Mammary epithelial cell (primary cell): ENCODE measurements at regions of chr17 and their contacts with region 1.

Region 1: DNA sequence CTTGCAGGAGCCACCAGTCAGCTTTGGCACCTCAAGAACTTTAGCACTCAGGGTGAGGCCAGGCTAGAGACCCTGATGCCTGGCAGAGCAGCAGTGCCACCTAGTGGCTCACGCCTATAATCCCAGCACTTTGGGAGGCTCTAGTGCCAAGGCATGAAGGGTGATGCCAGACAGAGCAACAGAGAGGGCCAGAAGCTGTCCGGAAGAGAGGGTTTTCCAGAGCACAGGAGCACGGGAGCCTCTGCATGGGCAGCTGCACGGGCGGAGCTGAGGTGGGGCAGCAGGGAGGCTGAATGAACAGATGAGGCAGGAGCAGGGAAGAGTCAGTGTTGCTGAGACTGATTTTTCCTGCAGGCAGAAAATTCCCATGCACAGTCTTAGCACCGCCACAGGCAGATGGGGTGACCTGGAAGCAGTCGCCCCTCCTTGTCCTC is 38.9 kb downstream of the MYH3 start:
- DNase-seq: peak; percentile 68
- H3K4me3 ChIP-seq: no peak overlapping the region
- H3K27ac ChIP-seq: no peak overlapping the region
- H3K4me1 ChIP-seq: peaks cover 28% of the 10 kb centered on the region
- H3K27me3 ChIP-seq: no peaks in the 10 kb centered on the region
- CTCF ChIP-seq: peak; percentile 90 to 97

Region 2: DNA sequence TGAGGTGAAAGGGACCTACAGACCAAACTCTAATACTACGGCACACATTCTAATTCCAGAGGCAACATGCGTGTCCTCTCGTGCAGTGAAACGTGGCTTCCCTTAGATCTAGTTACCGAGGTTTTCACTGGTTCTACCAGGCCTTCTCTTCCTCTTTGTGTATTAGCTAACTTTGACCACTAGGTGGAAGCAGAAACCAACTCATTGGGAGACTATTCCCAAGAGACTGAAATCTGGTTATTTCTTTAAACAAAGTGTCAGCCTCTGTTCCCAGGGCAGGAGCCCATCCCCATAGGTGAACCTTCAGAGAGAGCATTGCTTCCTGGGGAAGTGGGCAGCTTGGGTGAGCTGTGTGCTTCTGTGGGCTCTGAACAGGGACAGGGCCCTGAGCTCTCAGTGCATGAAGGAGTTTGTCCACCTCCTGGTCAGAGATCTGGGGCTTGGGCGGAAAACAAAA is 693.5 kb before region 1 on chr17:
- CTCF ChIA-PET with region 1: interaction called, 6 read pairs
- dilution Hi-C with region 1: no loop called
- in situ Hi-C with region 1: loop called (anchors 5 to 10 kb)
- intact Hi-C with region 1: loop called (anchors 1 kb)
- DNase-seq: peak; percentile 56
- H3K4me3 ChIP-seq: no peak overlapping the region
- H3K27ac ChIP-seq: no peak overlapping the region
- H3K4me1 ChIP-seq: no peaks in the 10 kb centered on the region
- H3K27me3 ChIP-seq: no peaks in the 10 kb centered on the region
- CTCF ChIP-seq: peak; percentile 77 to 85

Region 3: GRCh38 chr17:10417431-10417830 is 200.8 kb before region 1 on chr17:
- CTCF ChIA-PET with region 1: no interaction called
- dilution Hi-C with region 1: no loop called
- in situ Hi-C with region 1: no loop called
- intact Hi-C with region 1: no loop called
- DNase-seq: no peak
- H3K4me3 ChIP-seq: no peak overlapping the region
- H3K27ac ChIP-seq: no peak overlapping the region
- H3K4me1 ChIP-seq: no peaks in the 10 kb centered on the region
- H3K27me3 ChIP-seq: no peaks in the 10 kb centered on the region
- CTCF ChIP-seq: no peak

Region 4: GRCh38 chr17:10563991-10564660 is 54.1 kb before region 1 on chr17:
- CTCF ChIA-PET with region 1: no interaction called
- dilution Hi-C with region 1: no loop called
- in situ Hi-C with region 1: no loop called
- intact Hi-C with region 1: no loop called
- DNase-seq: no peak
- H3K4me3 ChIP-seq: no peak overlapping the region
- H3K27ac ChIP-seq: no peak overlapping the region
- H3K4me1 ChIP-seq: no peaks in the 10 kb centered on the region
- H3K27me3 ChIP-seq: no peaks in the 10 kb centered on the region
- CTCF ChIP-seq: no peak

Region 5: DNA sequence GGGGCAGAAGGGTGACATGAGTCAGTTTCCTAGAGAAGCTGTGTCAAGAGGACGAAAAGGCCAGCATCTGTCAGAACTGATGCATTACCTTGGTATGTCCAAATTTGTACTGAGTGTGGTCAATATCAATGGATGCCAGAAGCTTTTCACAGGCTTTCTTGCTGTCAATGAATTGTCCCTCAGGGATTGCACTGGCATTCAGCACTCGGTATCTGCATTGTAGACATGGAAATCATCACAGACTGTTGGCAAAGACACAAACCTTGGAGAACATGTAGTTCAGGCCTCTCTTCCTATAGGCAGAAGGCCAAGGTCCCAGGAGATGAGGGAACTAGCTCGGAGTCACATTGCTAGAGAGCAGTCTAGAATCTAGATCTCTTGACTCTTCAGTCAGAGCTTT is 22.3 kb after region 1 on chr17:
- CTCF ChIA-PET with region 1: no interaction called
- dilution Hi-C with region 1: no loop called
- in situ Hi-C with region 1: no loop called
- intact Hi-C with region 1: no loop called
- DNase-seq: no peak
- H3K4me3 ChIP-seq: no peak overlapping the region
- H3K27ac ChIP-seq: no peak overlapping the region
- H3K4me1 ChIP-seq: no peaks in the 10 kb centered on the region
- H3K27me3 ChIP-seq: no peaks in the 10 kb centered on the region
- CTCF ChIP-seq: no peak

Region 6: DNA sequence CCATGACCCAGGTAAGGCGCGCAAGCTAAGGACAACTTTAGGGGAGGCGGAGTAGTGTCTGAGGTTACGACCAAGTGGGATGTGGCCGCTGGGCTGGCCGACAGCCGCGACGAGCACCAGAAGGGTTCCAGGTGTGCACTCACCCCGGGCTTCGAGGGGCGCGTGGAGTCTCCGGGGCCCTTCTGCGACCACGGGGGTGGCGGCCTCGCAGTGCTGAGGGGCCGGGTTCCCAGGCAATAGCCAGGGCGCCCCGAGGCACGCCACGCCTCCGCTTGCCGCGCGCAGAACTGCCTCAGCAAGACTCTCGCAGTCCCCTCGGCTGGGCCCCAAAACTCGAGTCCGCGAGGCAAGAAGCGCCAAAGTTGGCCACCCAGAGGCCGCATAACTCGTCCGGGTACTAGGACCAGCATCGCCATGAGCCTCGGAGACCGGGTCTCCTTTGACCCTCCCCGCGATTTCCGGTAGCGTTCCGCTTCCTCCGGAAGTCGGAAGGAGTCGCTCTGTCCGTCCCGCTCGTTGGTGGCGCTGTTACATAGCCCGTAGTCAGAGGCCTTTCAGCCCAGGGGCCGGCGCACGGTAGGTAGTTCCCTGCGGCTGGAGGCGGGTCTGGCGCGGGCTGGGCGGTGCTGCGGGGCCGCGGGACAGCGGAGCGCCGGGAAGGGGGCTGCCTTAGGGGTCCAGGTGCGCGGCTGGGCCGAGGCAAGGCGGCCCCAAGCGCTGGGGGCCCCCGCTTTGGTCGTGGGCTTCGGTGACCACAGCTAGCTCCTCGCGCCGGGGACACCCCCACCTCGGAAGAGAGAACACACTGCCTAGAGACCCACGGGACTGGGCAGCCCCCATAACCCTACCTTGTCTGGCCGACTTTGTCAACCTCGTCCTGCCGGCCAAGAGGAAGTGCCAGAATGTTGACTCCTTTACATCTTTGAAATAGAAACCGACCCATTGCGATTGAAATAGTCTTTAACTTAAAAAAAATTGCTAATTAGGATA is 79.2 kb after region 1 on chr17 and contains the starts of genes ADPRM and SCO1:
- CTCF ChIA-PET with region 1: no interaction called
- dilution Hi-C with region 1: no loop called
- in situ Hi-C with region 1: no loop called
- intact Hi-C with region 1: loop called (anchors 1 kb)
- DNase-seq: peak; percentile 90
- H3K4me3 ChIP-seq: peak within 1 kb of the TSS; percentile 73 to 85 (median 80)
- H3K27ac ChIP-seq: peak within 1 kb of the TSS; percentile 80
- H3K4me1 ChIP-seq: peaks cover 11% of the 10 kb centered on the region
- H3K27me3 ChIP-seq: no peaks in the 10 kb centered on the region
- CTCF ChIP-seq: peak; percentile 10 to 59
- total RNA-seq, gene ADPRM: 8.8 to 10.2 TPM
- total RNA-seq, gene SCO1: 24.2 to 37.0 TPM

Region 7: GRCh38 chr17:10844621-10845387 is 226.6 kb after region 1 on chr17:
- CTCF ChIA-PET with region 1: no interaction called
- dilution Hi-C with region 1: no loop called
- in situ Hi-C with region 1: no loop called
- intact Hi-C with region 1: loop called (anchors 1 kb)
- DNase-seq: peak; percentile 22
- H3K4me3 ChIP-seq: peak overlapping the region in 2 of 3 experiments; percentile 22 to 47
- H3K27ac ChIP-seq: no peak overlapping the region
- H3K4me1 ChIP-seq: no peaks in the 10 kb centered on the region
- H3K27me3 ChIP-seq: no peaks in the 10 kb centered on the region
- CTCF ChIP-seq: peak; percentile 66 to 82

Region 8: GRCh38 chr17:11948789-11949188 is 1330.6 kb after region 1 on chr17:
- CTCF ChIA-PET with region 1: interaction called, 3 read pairs
- dilution Hi-C with region 1: no loop called
- in situ Hi-C with region 1: no loop called
- intact Hi-C with region 1: loop called (anchors 5 kb)
- DNase-seq: peak; percentile 78
- H3K4me3 ChIP-seq: no peak overlapping the region
- H3K27ac ChIP-seq: no peak overlapping the region
- H3K4me1 ChIP-seq: peaks cover 42% of the 10 kb centered on the region
- H3K27me3 ChIP-seq: no peaks in the 10 kb centered on the region
- CTCF ChIP-seq: no peak